MCF 10A (cell line): ENCODE measurements at regions of chr4 and their contacts with region 1.

Region 1: GRCh38 chr4:60805500-60806313 is 394.4 kb upstream of the ADGRL3 start:
- DNase-seq: peak; percentile 51
- H3K4me3 Mint-ChIP-seq: no peak overlapping the region
- H3K27ac Mint-ChIP-seq: no peak overlapping the region
- H3K4me1 Mint-ChIP-seq: peaks cover 5% of the 10 kb centered on the region
- H3K27me3 Mint-ChIP-seq: no peaks in the 10 kb centered on the region
- CTCF ChIP-seq: peak; percentile 57

Region 2: GRCh38 chr4:60817609-60818008 is 11.9 kb after region 1 on chr4:
- CTCF ChIA-PET with region 1: interaction called, 17 read pairs
- POLR2A ChIA-PET with region 1: no interaction called
- intact Hi-C with region 1: no loop called
- DNase-seq: no peak
- H3K4me3 Mint-ChIP-seq: no peak overlapping the region
- H3K27ac Mint-ChIP-seq: no peak overlapping the region
- H3K4me1 Mint-ChIP-seq: no peaks in the 10 kb centered on the region
- H3K27me3 Mint-ChIP-seq: no peaks in the 10 kb centered on the region
- CTCF ChIP-seq: no peak

Region 3: GRCh38 chr4:61200187-61200915 is 394.6 kb after region 1 on chr4 and contains the start of gene ADGRL3:
- CTCF ChIA-PET with region 1: interaction called, 4 read pairs
- POLR2A ChIA-PET with region 1: no interaction called
- intact Hi-C with region 1: loop called (anchors 5 kb)
- DNase-seq: peak; percentile 38
- H3K4me3 Mint-ChIP-seq: peak within 1 kb of the TSS; percentile 79
- H3K27ac Mint-ChIP-seq: no peak within 1 kb of the TSS
- H3K4me1 Mint-ChIP-seq: peaks cover 22% of the 10 kb centered on the region
- H3K27me3 Mint-ChIP-seq: no peaks in the 10 kb centered on the region
- CTCF ChIP-seq: no peak
- total RNA-seq, gene ADGRL3: 3.5 and 3.6 TPM in 2 replicates

Region 4: DNA sequence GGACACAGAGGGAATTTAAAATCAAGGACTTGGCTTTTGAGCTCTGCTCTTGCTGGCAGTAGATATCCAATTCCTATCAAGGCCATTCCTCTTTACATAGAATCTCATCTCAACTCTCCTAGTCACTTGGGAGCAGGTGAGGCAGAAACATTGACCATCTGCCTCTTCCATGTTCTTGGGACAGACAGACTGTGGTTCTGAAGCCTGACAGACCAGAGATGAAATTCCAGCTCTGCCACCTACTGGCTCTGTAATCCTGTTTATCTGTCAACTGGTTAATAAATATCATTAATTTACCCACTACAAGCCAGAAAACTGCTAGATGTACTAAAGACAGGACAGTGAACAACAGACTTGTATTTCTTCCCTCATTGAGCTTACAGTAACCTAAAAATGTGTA is 695.2 kb after region 1 on chr4:
- CTCF ChIA-PET with region 1: interaction called, 18 read pairs
- POLR2A ChIA-PET with region 1: no interaction called
- intact Hi-C with region 1: loop called (anchors 5 kb)
- DNase-seq: peak; percentile 41
- H3K4me3 Mint-ChIP-seq: no peak overlapping the region
- H3K27ac Mint-ChIP-seq: no peak overlapping the region
- H3K4me1 Mint-ChIP-seq: peaks cover 6% of the 10 kb centered on the region
- H3K27me3 Mint-ChIP-seq: no peaks in the 10 kb centered on the region
- CTCF ChIP-seq: peak; percentile 31